Caco-2 (cell line): ENCODE measurements at regions of chr1 and their contacts with region 1.

Region 1: GRCh38 chr1:189775380-189775779 is 702.3 kb downstream of the BRINP3 start:
- DNase-seq: peak in 1 of 2 experiments; percentile 32
- H3K4me3 ChIP-seq: no peak overlapping the region
- H3K4me3 Mint-ChIP-seq: no peak overlapping the region
- H3K27ac Mint-ChIP-seq: no peak overlapping the region
- H3K4me1 ChIP-seq: peaks cover 21% of the 10 kb centered on the region; the same call in 1 of the 2 replicates
- H3K4me1 Mint-ChIP-seq: peaks cover 7% of the 10 kb centered on the region
- H3K27me3 ChIP-seq: no peaks in the 10 kb centered on the region
- H3K27me3 Mint-ChIP-seq: no peaks in the 10 kb centered on the region
- CTCF ChIP-seq: no peak

Region 2: DNA sequence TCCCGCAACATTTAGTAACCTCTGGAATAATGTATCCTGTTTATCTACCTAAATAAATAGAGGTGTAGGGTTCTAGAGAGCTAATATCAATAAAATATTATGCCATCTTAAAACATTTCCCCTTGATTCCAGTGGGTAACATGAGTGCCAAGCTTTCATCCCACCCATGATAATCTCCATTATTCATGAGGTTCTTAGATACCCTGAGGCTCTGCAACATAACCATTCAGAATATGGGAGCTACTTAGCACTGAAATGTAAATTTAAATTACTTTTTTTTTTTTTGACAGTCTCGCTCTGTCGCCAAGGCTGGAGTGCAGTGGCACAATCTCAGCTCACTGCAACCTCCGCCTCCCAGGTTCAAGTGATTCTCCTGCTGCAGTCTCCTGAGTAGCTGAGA is 130.4 kb before region 1 on chr1:
- CTCF ChIA-PET with region 1: no interaction called
- POLR2A ChIA-PET with region 1: no interaction called
- intact Hi-C with region 1: loop called (anchors 2 kb)
- DNase-seq: no peak
- H3K4me3 ChIP-seq: no peak overlapping the region
- H3K4me3 Mint-ChIP-seq: no peak overlapping the region
- H3K27ac Mint-ChIP-seq: no peak overlapping the region
- H3K4me1 ChIP-seq: peaks cover 40% of the 10 kb centered on the region
- H3K4me1 Mint-ChIP-seq: peaks cover 11% of the 10 kb centered on the region
- H3K27me3 ChIP-seq: no peaks in the 10 kb centered on the region
- H3K27me3 Mint-ChIP-seq: no peaks in the 10 kb centered on the region
- CTCF ChIP-seq: no peak

Region 3: DNA sequence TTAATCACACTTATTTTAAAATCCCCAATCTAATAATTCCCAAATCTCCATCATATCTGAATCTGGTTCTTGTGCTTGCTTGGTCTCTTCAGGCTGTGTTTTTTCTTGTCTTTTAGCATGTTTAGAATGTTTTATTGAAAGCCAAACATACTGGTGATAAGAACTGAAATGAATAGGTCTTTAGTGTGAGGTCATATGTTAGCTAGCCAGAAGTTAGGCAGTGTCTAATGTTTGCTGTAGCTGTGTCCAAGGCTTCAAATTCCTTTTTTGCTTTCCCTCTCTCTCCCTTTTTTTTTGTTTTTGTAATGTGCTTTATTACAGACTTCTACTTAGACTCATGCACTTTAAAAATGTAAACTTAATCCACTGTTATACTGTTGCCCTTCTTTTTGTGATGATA is 22.9 kb before region 1 on chr1:
- CTCF ChIA-PET with region 1: no interaction called
- POLR2A ChIA-PET with region 1: no interaction called
- intact Hi-C with region 1: loop called (anchors 2 kb)
- DNase-seq: no peak
- H3K4me3 ChIP-seq: no peak overlapping the region
- H3K4me3 Mint-ChIP-seq: peak overlapping the region; percentile 31
- H3K27ac Mint-ChIP-seq: peak overlapping the region; percentile 23
- H3K4me1 ChIP-seq: peaks cover 11% of the 10 kb centered on the region; the same call in 1 of the 2 replicates
- H3K4me1 Mint-ChIP-seq: peaks cover 10% of the 10 kb centered on the region
- H3K27me3 ChIP-seq: no peaks in the 10 kb centered on the region
- H3K27me3 Mint-ChIP-seq: no peaks in the 10 kb centered on the region
- CTCF ChIP-seq: no peak

Region 4: GRCh38 chr1:189805735-189806134 is 30.4 kb after region 1 on chr1:
- CTCF ChIA-PET with region 1: no interaction called
- POLR2A ChIA-PET with region 1: no interaction called
- intact Hi-C with region 1: loop called (anchors 2 kb)
- DNase-seq: no peak
- H3K4me3 ChIP-seq: no peak overlapping the region
- H3K4me3 Mint-ChIP-seq: no peak overlapping the region
- H3K27ac Mint-ChIP-seq: no peak overlapping the region
- H3K4me1 ChIP-seq: no peaks in the 10 kb centered on the region
- H3K4me1 Mint-ChIP-seq: peaks cover 23% of the 10 kb centered on the region
- H3K27me3 ChIP-seq: no peaks in the 10 kb centered on the region
- H3K27me3 Mint-ChIP-seq: no peaks in the 10 kb centered on the region
- CTCF ChIP-seq: no peak